ENCODE measurements at regions of chr10 and their contacts with region 1.

Region 1: GRCh38 chr10:33263453-33263852 is 71.0 kb downstream of the NRP1 start:
- DNase-seq: peak; percentile 35
- H3K4me3 Mint-ChIP-seq: peak overlapping the region; percentile 49
- H3K27ac Mint-ChIP-seq: peak overlapping the region; percentile 89
- H3K4me1 Mint-ChIP-seq: peaks cover 39% of the 10 kb centered on the region
- H3K27me3 Mint-ChIP-seq: no peaks in the 10 kb centered on the region
- CTCF ChIP-seq: no peak

Region 2: GRCh38 chr10:33193057-33193700 is 70.3 kb before region 1 on chr10:
- CTCF ChIA-PET with region 1: interaction called, 12 read pairs
- POLR2A ChIA-PET with region 1: no interaction called
- intact Hi-C with region 1: no loop called
- DNase-seq: peak; percentile 92
- H3K4me3 Mint-ChIP-seq: peak overlapping the region; percentile 47
- H3K27ac Mint-ChIP-seq: peak overlapping the region; percentile 52
- H3K4me1 Mint-ChIP-seq: peaks cover 20% of the 10 kb centered on the region
- H3K27me3 Mint-ChIP-seq: no peaks in the 10 kb centered on the region
- CTCF ChIP-seq: peak; percentile 75

Region 3: GRCh38 chr10:33291053-33291592 is 27.7 kb after region 1 on chr10:
- CTCF ChIA-PET with region 1: no interaction called
- POLR2A ChIA-PET with region 1: interaction called, 3 read pairs
- intact Hi-C with region 1: loop called (anchors 2 kb)
- DNase-seq: peak; percentile 85
- H3K4me3 Mint-ChIP-seq: peak overlapping the region; percentile 64
- H3K27ac Mint-ChIP-seq: peak overlapping the region; percentile 98
- H3K4me1 Mint-ChIP-seq: peaks cover 18% of the 10 kb centered on the region
- H3K27me3 Mint-ChIP-seq: no peaks in the 10 kb centered on the region
- CTCF ChIP-seq: no peak

Region 4: DNA sequence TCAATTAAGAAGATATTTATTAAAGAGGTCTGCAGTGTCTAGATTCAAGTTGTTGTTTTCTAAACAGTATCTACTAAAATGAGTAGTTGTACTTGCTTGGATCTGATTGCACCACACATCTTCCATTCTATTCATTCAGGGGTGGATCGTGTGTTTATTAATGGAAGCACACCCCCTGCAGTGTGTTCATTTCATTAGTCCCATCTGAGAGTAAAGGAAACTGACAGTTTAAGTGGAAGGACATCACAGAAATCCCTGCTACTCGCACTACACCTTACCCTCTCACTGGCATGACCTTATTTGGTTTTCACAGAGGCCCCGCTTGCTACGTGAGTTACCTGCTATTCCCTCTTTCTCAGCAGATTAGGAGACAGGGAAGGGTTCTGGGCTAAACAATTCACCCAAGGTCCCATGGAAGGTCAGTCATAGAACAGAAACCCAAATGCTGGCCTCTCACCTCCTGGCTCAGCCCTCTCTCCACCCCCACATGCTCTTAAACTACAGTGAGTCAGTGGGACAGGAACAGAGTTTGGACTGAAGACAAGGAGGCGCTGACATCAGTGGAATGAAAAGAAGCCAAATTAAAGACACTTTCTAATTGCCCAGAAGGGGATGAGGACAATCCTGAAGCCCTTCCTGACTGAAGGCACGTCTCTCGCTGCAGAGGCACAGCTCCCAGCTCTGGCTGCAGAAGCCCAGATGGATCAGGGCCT is 440.2 kb after region 1 on chr10:
- CTCF ChIA-PET with region 1: no interaction called
- POLR2A ChIA-PET with region 1: no interaction called
- intact Hi-C with region 1: no loop called
- DNase-seq: peak; percentile 93
- H3K4me3 Mint-ChIP-seq: no peak overlapping the region
- H3K27ac Mint-ChIP-seq: peak overlapping the region; percentile 89
- H3K4me1 Mint-ChIP-seq: peaks cover 47% of the 10 kb centered on the region
- H3K27me3 Mint-ChIP-seq: no peaks in the 10 kb centered on the region
- CTCF ChIP-seq: no peak

Measured in MCF 10A (cell line).